PC-9 (cell line): ENCODE measurements at regions of chr4 and their contacts with region 1.

Region 1: GRCh38 chr4:55175779-55176231 is 50.4 kb upstream of the KDR start:
- DNase-seq: peak; percentile 29 to 77
- H3K4me3 ChIP-seq: peak overlapping the region; percentile 37; the same call in 1 of the 2 replicates
- H3K27ac ChIP-seq: peak overlapping the region; percentile 81
- H3K4me1 ChIP-seq: peaks cover 16% of the 10 kb centered on the region
- H3K27me3 ChIP-seq: no peaks in the 10 kb centered on the region
- CTCF ChIP-seq: no peak

Region 2: DNA sequence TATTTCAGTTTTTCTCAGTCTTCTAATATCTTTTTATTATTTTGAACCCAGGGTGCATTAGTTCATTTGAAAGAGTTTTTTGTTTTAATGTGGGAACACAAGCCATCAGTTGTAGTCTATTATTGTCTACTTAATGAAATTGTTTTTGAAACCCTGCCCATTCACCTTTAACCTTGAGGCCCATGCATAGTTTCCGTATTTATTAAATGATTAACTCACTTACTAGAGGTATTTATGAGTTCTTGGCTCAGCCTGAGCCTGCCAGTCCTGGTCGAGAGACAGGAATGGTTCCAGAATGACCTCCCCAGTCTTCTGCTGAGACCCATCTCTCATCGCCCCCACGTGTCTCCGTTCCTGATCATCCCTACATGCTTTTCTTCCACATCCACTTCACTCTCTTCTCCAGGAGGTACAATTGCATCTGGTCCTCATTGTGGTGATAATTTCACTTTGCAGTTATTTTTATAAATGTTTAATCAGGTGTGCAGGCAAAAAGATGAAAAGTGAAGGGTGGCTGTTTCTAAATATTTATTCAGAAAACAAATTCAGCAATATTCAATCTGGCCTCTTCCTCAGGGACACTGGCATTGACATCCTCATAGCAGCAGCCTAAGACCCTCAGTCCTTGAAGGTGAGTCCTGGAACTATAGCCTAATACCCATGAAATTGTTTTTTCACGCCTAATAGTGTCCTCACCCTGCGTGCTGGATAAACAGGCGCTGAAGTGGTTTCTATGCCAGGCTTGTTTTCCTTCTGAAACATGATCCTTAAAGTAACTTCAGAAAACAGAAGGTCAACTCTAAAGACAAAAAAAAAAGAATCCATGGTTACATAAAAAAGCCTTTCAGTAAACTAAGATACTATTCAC is 163.2 kb before region 1 on chr4:
- CTCF ChIA-PET with region 1: no interaction called
- POLR2A ChIA-PET with region 1: no interaction called
- intact Hi-C with region 1: loop called (anchors 5 kb)
- DNase-seq: no peak
- H3K4me3 ChIP-seq: no peak overlapping the region
- H3K27ac ChIP-seq: no peak overlapping the region
- H3K4me1 ChIP-seq: peaks cover 9% of the 10 kb centered on the region
- H3K27me3 ChIP-seq: no peaks in the 10 kb centered on the region
- CTCF ChIP-seq: no peak

Region 3: DNA sequence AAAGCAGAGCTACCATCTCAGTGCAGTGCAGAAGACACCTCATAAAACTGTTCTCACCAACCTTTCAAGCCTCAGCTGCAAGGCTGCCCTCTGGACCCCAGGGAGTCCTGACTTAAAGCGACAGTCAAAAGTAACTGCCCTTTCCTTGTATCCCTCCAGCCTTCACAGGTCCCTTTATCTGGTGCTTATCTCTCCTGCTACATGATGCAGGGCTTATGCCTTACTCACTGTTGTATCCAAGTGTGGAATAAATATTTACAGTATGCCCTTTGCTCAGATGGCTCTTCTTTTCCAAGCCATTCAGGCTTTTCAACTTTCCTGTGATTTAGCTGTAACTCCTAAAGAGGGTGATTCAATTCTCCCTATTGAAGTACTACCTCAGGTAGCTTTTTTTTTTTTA is 143.0 kb before region 1 on chr4:
- CTCF ChIA-PET with region 1: no interaction called
- POLR2A ChIA-PET with region 1: no interaction called
- intact Hi-C with region 1: loop called (anchors 1 kb)
- DNase-seq: peak; percentile 2 to 41
- H3K4me3 ChIP-seq: peak overlapping the region; percentile 29; the same call in 1 of the 2 replicates
- H3K27ac ChIP-seq: peak overlapping the region; percentile 88
- H3K4me1 ChIP-seq: peaks cover 32% of the 10 kb centered on the region
- H3K27me3 ChIP-seq: no peaks in the 10 kb centered on the region
- CTCF ChIP-seq: no peak

Region 4: GRCh38 chr4:55303818-55304217 is 128.0 kb after region 1 on chr4:
- CTCF ChIA-PET with region 1: no interaction called
- POLR2A ChIA-PET with region 1: interaction called, 24 read pairs
- intact Hi-C with region 1: loop called (anchors 5 kb)
- DNase-seq: peak; percentile 52 to 80
- H3K4me3 ChIP-seq: no peak overlapping the region
- H3K27ac ChIP-seq: peak overlapping the region; percentile 61
- H3K4me1 ChIP-seq: peaks cover 14% of the 10 kb centered on the region
- H3K27me3 ChIP-seq: no peaks in the 10 kb centered on the region
- CTCF ChIP-seq: no peak